Naive thymus-derived CD8-positive, alpha-beta T cell (primary cell): ENCODE measurements at regions of chr9 and their contacts with region 1.

Region 1: DNA sequence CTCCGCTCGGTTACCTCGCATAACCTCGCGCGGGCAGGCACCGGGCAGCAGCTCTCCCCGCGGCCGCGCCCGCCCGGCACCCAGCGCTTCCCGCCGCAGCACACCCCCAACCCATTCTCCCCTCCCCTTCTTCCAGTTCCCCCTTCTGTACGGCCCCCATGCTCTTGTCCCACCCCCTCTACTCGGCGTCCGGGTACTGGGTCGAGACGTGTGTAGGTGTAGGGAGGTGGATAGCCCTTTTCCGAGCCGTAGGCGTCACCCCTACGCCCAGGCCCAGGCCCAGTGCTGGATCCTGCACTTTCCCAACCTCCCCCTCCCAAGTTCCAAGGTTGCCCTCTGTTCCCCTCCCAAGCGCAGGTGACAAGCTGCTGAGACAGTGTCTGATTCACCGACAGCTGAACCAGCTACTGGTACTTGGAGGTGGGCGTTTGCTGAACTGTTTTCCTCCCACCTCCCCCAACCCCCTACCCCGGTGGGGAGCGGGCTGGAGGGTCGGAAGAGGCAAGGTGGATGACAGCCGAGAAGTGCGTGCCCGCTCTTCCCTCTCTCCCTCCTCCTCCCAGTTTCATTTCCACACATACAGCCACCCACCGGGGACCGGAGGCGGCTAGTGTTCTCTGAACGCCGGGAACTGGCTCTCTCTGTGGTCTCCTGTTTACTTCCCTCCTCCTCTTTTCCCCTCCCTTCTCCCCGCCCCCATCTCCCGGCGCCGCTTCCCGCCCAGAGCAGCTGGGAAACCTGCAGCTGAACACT is 6.0 kb upstream of the KLF9 start:
- DNase-seq: peak in 4 of 10 donors; percentile 26 to 84 (median 46)
- ATAC-seq: peak; percentile 1 to 46
- H3K4me3 Mint-ChIP-seq: peak overlapping the region; percentile 91 to 99 (median 97)
- H3K27ac Mint-ChIP-seq: peak overlapping the region; percentile 98 to 100 (median 100)
- H3K4me1 Mint-ChIP-seq: peaks cover 27 to 54% (median 48%) of the 10 kb centered on the region in 4 donors
- H3K27me3 Mint-ChIP-seq: no peaks in the 10 kb centered on the region

Region 2: GRCh38 chr9:70362952-70363351 is 57.5 kb before region 1 on chr9:
- POLR2A ChIA-PET with region 1: no interaction called
- DNase-seq: no peak
- ATAC-seq: no peak
- H3K4me3 Mint-ChIP-seq: no peak overlapping the region
- H3K27ac Mint-ChIP-seq: no peak overlapping the region
- H3K4me1 Mint-ChIP-seq: peaks cover 0 to 1% (median 0%) of the 10 kb centered on the region in 4 donors
- H3K27me3 Mint-ChIP-seq: no peaks in the 10 kb centered on the region

Region 3: DNA sequence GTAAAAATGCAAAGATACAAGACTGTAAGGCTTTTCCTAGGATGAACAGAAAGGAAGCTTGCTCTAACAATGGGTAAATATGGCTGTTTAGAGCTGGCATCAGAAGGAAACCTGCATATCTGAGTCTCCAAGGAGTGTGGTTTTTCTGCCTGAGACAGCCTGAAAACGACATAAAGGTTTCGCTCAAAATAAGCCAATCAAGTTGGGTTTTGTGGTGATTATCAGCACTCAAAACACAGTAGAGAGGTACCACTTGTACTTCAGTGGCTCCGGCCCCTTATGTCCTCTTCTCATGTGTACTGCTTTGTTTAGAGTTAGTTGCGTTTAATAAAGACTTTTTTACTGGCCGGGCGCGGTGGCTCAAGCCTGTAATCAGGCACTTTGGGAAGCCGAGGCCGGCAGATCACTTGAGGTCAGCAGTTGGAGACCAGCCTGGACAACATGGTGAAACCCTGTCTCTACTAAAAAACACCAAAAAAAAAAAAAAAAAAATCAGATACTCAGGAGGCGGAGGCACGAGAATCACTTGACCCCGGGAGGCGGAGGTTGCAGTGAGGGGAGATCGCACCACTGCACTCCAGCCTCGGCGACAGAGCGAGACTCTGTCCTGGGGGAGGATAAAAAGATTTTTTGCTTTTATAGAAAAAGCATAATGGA is 45.4 kb before region 1 on chr9:
- POLR2A ChIA-PET with region 1: no interaction called
- DNase-seq: no peak
- ATAC-seq: no peak
- H3K4me3 Mint-ChIP-seq: no peak overlapping the region
- H3K27ac Mint-ChIP-seq: peak overlapping the region in 1 of 10 donors; percentile 28
- H3K4me1 Mint-ChIP-seq: peaks cover 0 to 2% (median under 1%) of the 10 kb centered on the region in 4 donors
- H3K27me3 Mint-ChIP-seq: peaks cover 0 to 2% (median 0%) of the 10 kb centered on the region in 5 donors

Region 4: DNA sequence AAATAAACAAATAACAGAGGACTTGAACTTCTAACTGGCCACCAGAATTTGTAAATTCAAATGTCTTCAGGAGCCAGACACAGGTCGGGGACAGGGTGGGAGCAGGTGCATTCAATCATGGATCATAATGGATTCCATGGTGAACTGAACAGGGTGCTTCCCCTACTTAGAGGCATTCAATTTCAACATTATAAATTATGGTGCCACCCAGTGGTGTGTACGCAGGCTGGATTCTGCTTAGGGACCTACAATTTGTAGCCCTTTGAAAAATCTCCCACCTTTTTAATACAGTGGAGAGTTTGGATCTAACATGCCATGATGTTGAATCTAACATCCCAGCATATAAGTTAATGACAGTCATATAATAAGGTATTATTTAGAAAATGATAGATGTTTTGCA is 28.3 kb before region 1 on chr9:
- POLR2A ChIA-PET with region 1: interaction called, 23 read pairs
- DNase-seq: no peak
- ATAC-seq: peak; percentile 49 to 66
- H3K4me3 Mint-ChIP-seq: peak overlapping the region in 7 of 10 donors; percentile 15 to 79 (median 51)
- H3K27ac Mint-ChIP-seq: peak overlapping the region in 8 of 10 donors; percentile 32 to 79 (median 60)
- H3K4me1 Mint-ChIP-seq: peaks cover 46 to 90% (median 85%) of the 10 kb centered on the region in 4 donors
- H3K27me3 Mint-ChIP-seq: no peaks in the 10 kb centered on the region

Region 5: DNA sequence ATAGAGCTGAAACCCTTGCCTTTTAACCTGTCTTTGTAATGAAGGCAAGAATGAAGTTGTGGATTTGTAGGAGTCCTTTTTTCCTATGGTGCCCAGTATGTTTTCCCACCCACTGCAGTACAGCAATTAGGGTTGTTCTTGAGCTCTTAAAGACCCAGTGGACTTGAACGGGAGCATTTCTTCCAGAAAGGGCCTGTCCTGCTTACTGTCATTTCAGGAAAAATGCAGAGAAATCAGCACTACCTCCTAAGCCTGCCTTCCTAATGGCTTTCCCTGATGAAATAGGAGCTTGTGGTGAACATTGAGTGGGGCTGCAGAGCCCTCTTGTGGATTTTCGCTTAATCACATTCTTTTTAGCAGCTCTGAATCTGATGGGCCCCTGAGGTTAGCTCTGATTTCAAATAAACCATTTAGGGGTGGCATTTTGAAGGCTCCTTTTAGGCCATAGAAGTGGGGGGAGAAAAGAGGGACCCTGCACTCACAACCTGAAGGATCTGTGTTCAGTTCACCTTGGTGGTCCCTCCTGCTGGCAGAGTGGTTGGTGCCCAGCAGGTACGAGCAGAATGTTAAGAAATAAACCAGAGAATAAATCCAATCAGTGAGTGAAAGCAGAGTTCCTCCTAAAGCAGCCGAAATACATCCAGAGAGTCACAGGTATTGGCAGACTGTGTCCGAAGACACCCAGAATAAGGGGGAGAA is 182.0 kb after region 1 on chr9:
- POLR2A ChIA-PET with region 1: interaction called, 16 read pairs
- DNase-seq: peak in 9 of 10 donors; percentile 17 to 68 (median 40)
- ATAC-seq: peak; percentile 66 to 83
- H3K4me3 Mint-ChIP-seq: no peak overlapping the region
- H3K27ac Mint-ChIP-seq: peak overlapping the region in 4 of 10 donors; percentile 6 to 61 (median 32)
- H3K4me1 Mint-ChIP-seq: peaks cover 3 to 8% (median 6%) of the 10 kb centered on the region in 4 donors
- H3K27me3 Mint-ChIP-seq: no peaks in the 10 kb centered on the region